Activated CD4-positive, alpha-beta T cell treated with anti-CD3 and anti-CD28 coated beads, Interleukin-2, amount 10 ng/mL, durations not matched to agents 24 days and 14 days (primary cell): ENCODE measurements at regions of chr1 and their contacts with region 1.

Region 1: DNA sequence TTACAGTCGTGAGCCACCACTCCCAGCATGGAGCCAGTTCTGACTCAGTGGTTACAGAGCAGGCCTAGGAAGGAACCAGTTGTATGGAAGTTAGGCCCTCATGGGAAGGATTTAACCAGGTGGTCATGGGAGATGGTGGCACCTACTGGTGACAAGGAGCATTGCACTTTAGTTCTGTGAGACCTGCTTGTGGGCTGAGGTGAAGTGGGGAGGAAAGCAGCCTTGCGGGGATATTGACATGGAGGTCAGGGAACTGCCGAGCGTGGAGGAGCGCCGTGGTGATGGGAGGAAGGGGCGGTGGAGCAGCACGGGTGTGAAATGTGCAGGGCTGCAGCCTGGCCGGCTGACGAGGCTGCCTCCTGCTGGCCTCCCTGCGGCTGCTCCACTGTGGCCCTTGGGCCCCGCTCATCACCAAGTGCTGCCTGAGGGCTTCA is 100.4 kb downstream of the GALNT2 start:
- DNase-seq: peak; percentile 78
- H3K4me3 Mint-ChIP-seq: no peak overlapping the region
- H3K27ac Mint-ChIP-seq: peak overlapping the region; percentile 1
- H3K4me1 Mint-ChIP-seq: peaks cover 36% of the 10 kb centered on the region
- H3K27me3 Mint-ChIP-seq: no peaks in the 10 kb centered on the region

Region 2: GRCh38 chr1:229714964-229715603 is 452.4 kb before region 1 on chr1:
- intact Hi-C with region 1: loop called (anchors 2 kb)
- DNase-seq: peak; percentile 78
- H3K4me3 Mint-ChIP-seq: no peak overlapping the region
- H3K27ac Mint-ChIP-seq: no peak overlapping the region
- H3K4me1 Mint-ChIP-seq: no peaks in the 10 kb centered on the region
- H3K27me3 Mint-ChIP-seq: peaks cover 2% of the 10 kb centered on the region

Region 3: DNA sequence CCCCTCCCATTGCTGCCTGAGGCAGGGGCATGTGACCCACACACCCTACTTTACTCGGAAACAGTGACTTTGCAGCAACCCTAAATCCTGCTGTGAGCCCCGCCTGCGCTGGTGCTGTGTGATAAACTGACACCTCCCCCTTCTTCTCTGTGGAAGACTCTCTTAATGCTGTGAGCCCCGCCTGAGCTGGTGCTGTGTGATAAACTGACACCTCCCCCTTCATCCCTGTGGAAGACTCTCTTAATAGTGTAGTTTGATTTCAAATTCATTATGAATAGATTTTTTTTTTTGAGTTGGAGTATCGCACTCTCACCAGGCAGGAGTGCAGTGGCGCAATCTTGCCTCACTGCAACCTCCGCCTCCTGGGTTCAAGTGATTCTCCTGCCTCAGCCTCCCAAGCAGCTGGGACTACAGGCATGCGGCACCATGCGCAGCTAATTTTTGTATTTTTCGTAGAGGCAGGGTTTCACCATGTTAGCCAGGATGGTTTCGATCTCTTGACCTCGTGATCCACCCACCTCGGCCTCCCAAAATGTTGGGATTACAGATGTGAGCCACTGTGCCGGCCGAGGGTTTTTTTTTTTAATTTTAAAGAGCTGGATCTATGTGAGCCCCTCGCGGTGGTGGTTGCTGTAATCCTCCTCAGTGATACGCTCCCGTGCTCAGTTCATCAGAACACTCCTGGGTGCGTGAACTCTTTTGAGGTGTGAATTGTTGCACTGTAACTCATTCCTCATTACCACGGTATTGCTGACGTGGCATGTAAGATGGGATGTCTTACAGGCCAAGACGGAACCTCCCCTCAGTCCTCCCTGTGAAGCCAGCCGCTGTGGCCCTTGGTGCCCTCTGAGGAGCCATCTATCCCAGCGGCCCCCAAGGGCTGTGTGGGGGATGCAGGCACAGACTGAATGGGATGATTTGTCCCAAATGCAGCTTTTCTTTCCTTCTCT is 40.1 kb before region 1 on chr1:
- intact Hi-C with region 1: loop called (anchors 2 kb)
- DNase-seq: peak; percentile 88
- H3K4me3 Mint-ChIP-seq: peak overlapping the region; percentile 76
- H3K27ac Mint-ChIP-seq: peak overlapping the region; percentile 81
- H3K4me1 Mint-ChIP-seq: peaks cover 70% of the 10 kb centered on the region
- H3K27me3 Mint-ChIP-seq: no peaks in the 10 kb centered on the region

Region 4: GRCh38 chr1:230208619-230209261 is 41.3 kb after region 1 on chr1:
- intact Hi-C with region 1: no loop called
- DNase-seq: peak; percentile 76
- H3K4me3 Mint-ChIP-seq: peak overlapping the region; percentile 75
- H3K27ac Mint-ChIP-seq: peak overlapping the region; percentile 99
- H3K4me1 Mint-ChIP-seq: peaks cover 62% of the 10 kb centered on the region
- H3K27me3 Mint-ChIP-seq: no peaks in the 10 kb centered on the region

Region 5: DNA sequence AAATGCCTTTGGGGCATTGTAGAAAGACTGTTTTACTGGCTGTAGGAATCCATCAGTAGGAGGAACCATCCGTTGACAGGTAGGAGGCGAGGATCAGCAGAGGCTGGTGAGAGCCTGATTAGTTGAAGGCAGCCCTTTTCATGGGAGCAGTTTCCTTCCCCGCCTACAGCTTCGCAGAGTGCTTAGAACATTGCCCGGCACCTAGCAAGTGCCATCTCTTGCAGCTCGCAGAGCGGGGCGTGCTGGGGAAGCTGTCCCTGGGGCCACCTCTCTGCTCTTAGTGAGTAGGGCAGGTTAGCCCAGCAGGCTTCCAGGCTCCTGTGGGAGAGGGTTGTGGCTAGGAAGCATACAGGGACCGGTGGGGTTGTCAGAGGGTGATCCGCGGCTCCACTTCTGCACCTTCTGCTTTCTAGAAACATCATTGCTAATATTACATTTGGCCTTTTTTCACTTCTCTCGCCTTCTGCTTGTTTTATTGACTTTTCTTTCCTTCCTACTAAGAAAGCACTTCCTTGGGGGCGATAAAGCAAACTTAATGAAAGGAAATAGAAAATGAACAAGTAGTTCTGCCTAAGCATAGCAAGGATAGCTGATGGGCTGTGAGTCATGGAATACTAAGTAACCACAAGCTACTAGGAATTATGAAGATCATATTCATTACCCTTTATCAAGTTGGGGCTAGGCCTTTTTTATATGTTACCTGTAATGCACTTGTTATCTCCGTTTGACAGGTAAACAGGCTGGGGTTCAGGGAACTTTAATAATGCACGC is 76.3 kb after region 1 on chr1:
- intact Hi-C with region 1: loop called (anchors 5 kb)
- DNase-seq: no peak
- H3K4me3 Mint-ChIP-seq: no peak overlapping the region
- H3K27ac Mint-ChIP-seq: peak overlapping the region; percentile 68
- H3K4me1 Mint-ChIP-seq: peaks cover 40% of the 10 kb centered on the region
- H3K27me3 Mint-ChIP-seq: no peaks in the 10 kb centered on the region